Posterior cingulate gyrus (tissue), 11 donors: ENCODE measurements at regions of chr22 and their contacts with region 1.

Region 1: GRCh38 chr22:50562523-50563412 is at the start of gene SYCE3:
- DNase-seq: peak; percentile 93 to 100 (median 98)

Region 2: GRCh38 chr22:50513175-50513574 is 49.6 kb before region 1 on chr22:
- intact Hi-C with region 1: no loop called
- DNase-seq: no peak

Region 3: GRCh38 chr22:50525390-50526068 is 37.2 kb before region 1 on chr22 and contains the start of gene SCO2:
- intact Hi-C with region 1: loop called (anchors 2 kb)
- DNase-seq: peak; percentile 90 to 99 (median 92)

Region 4: DNA sequence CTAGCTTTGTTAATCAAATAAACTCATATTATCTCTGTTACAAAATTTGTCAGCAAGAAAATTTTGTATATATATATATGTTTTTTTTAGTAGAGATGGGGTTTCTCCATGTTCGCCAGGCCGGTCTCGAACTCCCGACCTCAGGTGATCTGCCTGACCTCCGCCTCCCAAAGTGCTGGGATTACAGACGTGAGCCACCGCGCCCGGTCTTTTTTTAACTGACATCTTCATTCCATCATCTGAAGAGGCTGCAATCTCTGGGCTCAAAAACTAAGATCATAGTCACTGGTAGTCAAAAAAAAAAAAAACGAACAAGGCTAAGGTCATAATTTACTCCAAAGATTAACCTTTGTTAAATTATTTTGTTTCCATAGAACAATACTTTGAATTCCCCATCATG is 22.4 kb before region 1 on chr22:
- intact Hi-C with region 1: loop called (anchors 2 kb)
- DNase-seq: peak in 1 of 10 donors; percentile 29